HCT116 (cell line): ENCODE measurements at regions of chr2 and their contacts with region 1.

Region 1: DNA sequence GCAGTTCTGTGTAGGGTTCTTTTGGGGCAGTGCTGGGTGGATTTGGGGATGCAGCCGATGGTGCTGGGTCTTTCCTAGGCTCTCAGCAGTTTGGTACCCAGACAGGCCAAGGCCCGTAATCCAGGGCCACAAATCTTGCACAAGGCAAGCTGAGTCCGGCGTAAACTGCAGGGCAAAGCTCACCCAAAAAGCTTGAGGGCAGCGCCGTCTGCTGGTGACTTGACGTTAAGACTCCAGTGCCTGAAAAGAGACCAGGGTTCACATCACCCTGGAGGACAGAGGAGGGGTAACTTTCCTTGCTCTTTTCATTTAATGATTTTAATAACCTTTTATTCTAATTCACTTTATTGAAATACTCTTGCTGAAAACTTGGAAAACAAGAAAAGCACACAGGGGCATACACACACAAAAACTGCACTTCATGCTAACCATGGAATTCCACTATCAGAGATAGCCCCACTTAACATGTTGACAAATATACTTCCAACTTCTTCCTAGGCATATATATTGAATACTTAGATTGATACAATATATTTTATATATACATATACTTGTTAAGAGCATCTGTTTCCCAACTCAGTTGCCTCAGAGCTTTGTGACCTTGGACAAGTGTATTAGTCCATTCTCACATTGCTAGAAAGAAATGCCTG is 38.9 kb downstream of the CNGA3 start:
- DNase-seq: peak; percentile 60
- ATAC-seq: peak; percentile 99
- H3K4me3 ChIP-seq: no peak overlapping the region
- H3K27ac ChIP-seq: no peak overlapping the region
- H3K4me1 ChIP-seq: 0 out of 4 replicates have a peak, but pooled peaks cover 0 to 2% of the 10 kb centered on the region in 2 experiments
- H3K27me3 ChIP-seq: no peaks in the 10 kb centered on the region
- CTCF ChIP-seq: peak; percentile 95 to 99 (median 95)
- POLR2A ChIP-seq: no peak
- RAD21 ChIP-seq: peak; percentile 97

Region 2: DNA sequence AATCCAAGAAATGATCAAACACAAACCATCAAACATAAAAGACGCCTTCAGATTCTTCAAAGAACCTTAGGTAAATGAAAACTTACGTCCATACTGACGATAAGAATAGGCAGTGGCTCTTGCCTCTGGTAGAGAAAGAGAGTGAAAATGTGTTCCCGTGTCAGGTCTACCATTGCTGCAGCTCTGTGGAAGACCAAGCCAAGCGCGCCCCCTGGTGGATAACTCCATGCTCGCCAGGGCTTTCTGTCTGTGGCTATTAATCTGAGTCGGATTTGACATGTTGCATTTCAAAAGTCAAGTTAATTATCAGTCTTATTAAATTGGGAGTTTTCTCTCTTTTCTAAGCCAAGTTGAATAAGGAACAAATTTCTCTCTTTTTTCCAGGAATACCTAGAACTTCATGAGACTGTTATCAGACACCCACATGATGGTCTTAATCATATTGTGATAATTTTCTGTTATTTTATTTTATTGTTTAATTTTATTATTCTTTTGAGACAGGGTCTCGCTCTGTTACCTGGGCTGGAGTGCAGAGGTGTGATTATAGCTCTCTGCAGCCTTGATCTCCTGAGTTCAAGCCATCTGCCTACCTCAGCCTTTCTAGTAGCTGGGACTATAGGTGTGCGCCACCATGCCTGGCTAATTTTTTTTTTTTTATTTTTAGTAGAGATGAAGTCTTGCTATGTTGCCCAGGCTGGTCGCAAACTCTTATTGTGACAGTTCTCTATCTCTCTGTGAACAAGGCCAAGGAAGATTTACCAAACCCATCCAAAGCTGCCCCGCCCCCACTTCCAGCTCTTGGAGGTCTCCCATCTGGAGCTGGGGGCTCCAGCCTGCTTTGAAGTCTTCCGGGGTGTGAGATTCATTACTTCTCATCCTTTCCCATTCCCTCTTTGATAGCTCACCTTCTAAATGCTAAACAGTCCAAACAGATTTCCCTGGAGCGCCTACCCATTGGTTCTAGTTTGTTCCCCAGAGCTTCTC is 687.6 kb before region 1 on chr2:
- CTCF ChIA-PET with region 1: interaction called, 25 read pairs
- POLR2A ChIA-PET with region 1: no interaction called
- RAD21 ChIA-PET with region 1: interaction called, 7 to 9 read pairs
- intact Hi-C with region 1: loop called (anchors 1 kb)
- DNase-seq: peak; percentile 71
- ATAC-seq: peak; percentile 85
- H3K4me3 ChIP-seq: no peak overlapping the region
- H3K27ac ChIP-seq: no peak overlapping the region
- H3K4me1 ChIP-seq: peaks cover 0 to 5% of the 10 kb centered on the region in 2 experiments; a peak in 1 of 4 replicates
- H3K27me3 ChIP-seq: no peaks in the 10 kb centered on the region
- CTCF ChIP-seq: peak; percentile 85 to 99 (median 92)
- POLR2A ChIP-seq: no peak
- RAD21 ChIP-seq: peak; percentile 100

Region 3: GRCh38 chr2:97710596-97711386 is 674.4 kb before region 1 on chr2:
- CTCF ChIA-PET with region 1: interaction called, 12 read pairs
- POLR2A ChIA-PET with region 1: no interaction called
- RAD21 ChIA-PET with region 1: no interaction called
- intact Hi-C with region 1: loop called (anchors 1 kb)
- DNase-seq: no peak
- ATAC-seq: no peak
- H3K4me3 ChIP-seq: no peak overlapping the region
- H3K27ac ChIP-seq: no peak overlapping the region
- H3K4me1 ChIP-seq: peaks cover 0 to 6% of the 10 kb centered on the region in 2 experiments; a peak in 2 of 4 replicates
- H3K27me3 ChIP-seq: no peaks in the 10 kb centered on the region
- CTCF ChIP-seq: no peak
- POLR2A ChIP-seq: no peak
- RAD21 ChIP-seq: no peak

Region 4: GRCh38 chr2:97740590-97741182 is 644.5 kb before region 1 on chr2:
- CTCF ChIA-PET with region 1: interaction called, 19 read pairs
- POLR2A ChIA-PET with region 1: no interaction called
- RAD21 ChIA-PET with region 1: interaction called, 3 to 4 read pairs
- intact Hi-C with region 1: loop called (anchors 1 kb)
- DNase-seq: peak; percentile 29
- ATAC-seq: peak; percentile 86
- H3K4me3 ChIP-seq: no peak overlapping the region
- H3K27ac ChIP-seq: no peak overlapping the region
- H3K4me1 ChIP-seq: peaks cover 0 to 18% of the 10 kb centered on the region in 2 experiments; a peak in 2 of 4 replicates
- H3K27me3 ChIP-seq: no peaks in the 10 kb centered on the region
- CTCF ChIP-seq: peak; percentile 57 to 91 (median 82); a peak in 5 of 6 replicates
- POLR2A ChIP-seq: no peak
- RAD21 ChIP-seq: peak; percentile 69

Region 5: GRCh38 chr2:97774425-97774824 is 610.8 kb before region 1 on chr2:
- CTCF ChIA-PET with region 1: interaction called, 4 read pairs
- POLR2A ChIA-PET with region 1: no interaction called
- RAD21 ChIA-PET with region 1: no interaction called
- intact Hi-C with region 1: loop called (anchors 10 kb)
- DNase-seq: no peak
- ATAC-seq: peak; percentile 98
- H3K4me3 ChIP-seq: no peak overlapping the region
- H3K27ac ChIP-seq: no peak overlapping the region
- H3K4me1 ChIP-seq: no peaks in the 10 kb centered on the region
- H3K27me3 ChIP-seq: no peaks in the 10 kb centered on the region
- CTCF ChIP-seq: peak; percentile 22 to 67 (median 60); a peak in 5 of 6 replicates
- POLR2A ChIP-seq: no peak
- RAD21 ChIP-seq: peak; percentile 49

Region 6: GRCh38 chr2:97806738-97807618 is 578.2 kb before region 1 on chr2:
- CTCF ChIA-PET with region 1: interaction called, 13 read pairs
- POLR2A ChIA-PET with region 1: no interaction called
- RAD21 ChIA-PET with region 1: interaction called in 1 of 2 experiments, 5 read pairs
- intact Hi-C with region 1: loop called (anchors 1 kb)
- DNase-seq: peak; percentile 45
- ATAC-seq: peak; percentile 98
- H3K4me3 ChIP-seq: no peak overlapping the region
- H3K27ac ChIP-seq: no peak overlapping the region
- H3K4me1 ChIP-seq: peaks cover 0 to 9% of the 10 kb centered on the region in 2 experiments; a peak in 1 of 4 replicates
- H3K27me3 ChIP-seq: no peaks in the 10 kb centered on the region
- CTCF ChIP-seq: peak; percentile 75 to 91 (median 88)
- POLR2A ChIP-seq: no peak
- RAD21 ChIP-seq: peak; percentile 96